ENCODE measurements at regions of chr17 and their contacts with region 1.

Region 1: GRCh38 chr17:77061669-77062068 is 79.1 kb upstream of the SEC14L1 start:
- DNase-seq: no peak
- ATAC-seq: no peak
- H3K4me3 ChIP-seq: no peak overlapping the region
- H3K27ac ChIP-seq: no peak overlapping the region
- H3K4me1 ChIP-seq: no peaks in the 10 kb centered on the region; the same call in 1 of the 2 replicates
- H3K27me3 ChIP-seq: peaks cover 28% of the 10 kb centered on the region
- CTCF ChIP-seq: no peak
- POLR2A ChIP-seq: no peak
- RAD21 ChIP-seq: no peak

Region 2: DNA sequence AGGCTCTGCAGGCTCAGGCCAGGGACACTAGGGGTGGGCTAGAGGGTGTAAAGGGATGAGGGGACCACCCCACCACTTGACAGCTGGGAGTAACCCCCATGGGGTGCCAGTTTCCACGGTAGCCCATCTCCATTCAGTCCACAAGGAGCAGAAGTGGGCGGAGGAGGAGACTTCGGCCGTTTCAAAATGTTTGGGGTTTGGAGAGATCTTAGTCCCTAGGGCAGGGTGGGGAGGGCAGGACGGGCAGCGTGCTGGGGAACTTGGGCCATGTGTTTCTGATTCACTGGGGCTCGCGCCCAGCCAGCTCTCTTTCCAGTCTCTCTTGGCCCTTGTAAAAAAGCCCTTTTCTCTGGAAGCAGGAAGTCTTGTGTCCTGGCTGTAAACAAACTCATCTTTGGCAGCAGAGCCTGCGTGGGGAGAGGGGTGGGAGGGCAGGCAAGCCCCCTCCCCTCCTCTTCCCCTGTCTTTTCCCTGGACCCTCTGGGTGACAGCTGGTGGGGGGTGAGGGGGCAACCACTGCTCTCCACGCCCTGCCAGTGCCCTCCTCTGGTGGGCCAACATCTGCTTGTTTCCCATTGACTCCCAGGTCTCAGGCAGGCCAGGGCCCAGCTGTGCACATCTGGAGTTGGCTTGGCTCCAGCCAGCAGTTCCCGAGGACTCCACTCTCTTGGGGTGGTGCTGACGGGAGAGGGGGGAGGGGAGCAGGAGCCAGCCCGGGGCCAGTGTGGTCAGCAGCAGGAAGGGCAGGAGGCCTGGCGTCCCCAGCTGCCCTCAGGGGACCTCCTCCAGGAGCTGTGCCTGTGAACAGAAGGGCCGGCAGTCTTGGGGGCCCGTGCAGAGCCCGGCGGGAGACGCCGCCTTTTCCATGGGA is 532.2 kb before region 1 on chr17:
- CTCF ChIA-PET with region 1: no interaction called
- POLR2A ChIA-PET with region 1: no interaction called
- dilution Hi-C with region 1: no loop called
- in situ Hi-C with region 1: no loop called
- intact Hi-C with region 1: loop called (anchors 10 kb)
- DNase-seq: peak; percentile 88
- ATAC-seq: peak; percentile 70
- H3K4me3 ChIP-seq: no peak overlapping the region
- H3K27ac ChIP-seq: peak overlapping the region; percentile 89
- H3K4me1 ChIP-seq: peaks cover 47% of the 10 kb centered on the region
- H3K27me3 ChIP-seq: no peaks in the 10 kb centered on the region
- CTCF ChIP-seq: no peak
- POLR2A ChIP-seq: peak; percentile 6; the same call in 1 of the 2 replicates
- RAD21 ChIP-seq: no peak

Region 3: DNA sequence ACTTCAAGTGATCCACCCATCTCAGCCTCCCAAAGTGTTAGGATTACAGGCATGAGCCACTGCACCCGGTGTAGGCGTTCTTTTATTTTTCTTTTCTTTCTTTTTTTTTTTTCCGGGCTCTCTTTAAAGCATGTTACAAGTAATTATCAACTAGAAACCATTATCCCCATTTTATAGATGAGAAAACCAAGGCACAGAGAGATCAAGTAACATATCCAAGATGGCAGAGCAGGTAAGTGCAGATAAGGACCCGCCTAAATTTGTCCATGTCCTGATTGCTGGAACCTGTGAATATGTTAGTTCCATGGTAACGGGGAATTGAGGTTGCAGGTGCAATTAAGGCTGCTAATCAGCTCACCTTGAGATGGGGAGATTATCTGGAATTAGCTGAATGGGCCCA is 269.3 kb before region 1 on chr17:
- CTCF ChIA-PET with region 1: no interaction called
- POLR2A ChIA-PET with region 1: no interaction called
- dilution Hi-C with region 1: no loop called
- in situ Hi-C with region 1: no loop called
- intact Hi-C with region 1: no loop called
- DNase-seq: no peak
- ATAC-seq: no peak
- H3K4me3 ChIP-seq: no peak overlapping the region
- H3K27ac ChIP-seq: no peak overlapping the region
- H3K4me1 ChIP-seq: peaks cover 2% of the 10 kb centered on the region; the same call in 1 of the 2 replicates
- H3K27me3 ChIP-seq: no peaks in the 10 kb centered on the region
- CTCF ChIP-seq: no peak
- POLR2A ChIP-seq: no peak
- RAD21 ChIP-seq: no peak

Region 4: DNA sequence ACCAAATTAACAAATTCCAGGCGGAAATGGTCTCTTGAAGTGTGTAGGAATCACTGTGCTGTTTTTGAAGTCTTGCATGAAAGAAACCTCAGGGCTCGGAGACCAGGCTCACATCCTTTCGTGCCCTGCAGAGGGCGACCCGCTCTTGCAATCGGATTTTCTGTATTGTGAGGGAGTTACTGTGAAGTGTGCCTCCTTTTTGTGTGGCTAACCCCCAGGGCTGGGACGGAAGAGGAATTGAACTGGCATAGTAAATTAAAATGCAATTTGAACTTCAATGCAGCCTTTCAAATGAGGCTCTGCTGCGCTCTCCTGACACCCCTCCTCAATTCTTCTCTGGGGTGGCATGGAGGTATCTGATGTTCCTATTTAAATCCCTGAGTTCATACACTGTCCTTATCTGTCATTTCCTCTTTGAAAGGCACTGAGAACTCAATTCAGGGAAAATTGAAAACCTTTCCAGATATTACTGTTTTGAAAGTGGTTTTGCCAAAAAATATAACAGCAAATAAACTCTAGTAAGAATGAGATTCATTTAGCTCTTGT is 245.0 kb before region 1 on chr17:
- CTCF ChIA-PET with region 1: interaction called, 4 read pairs
- POLR2A ChIA-PET with region 1: no interaction called
- dilution Hi-C with region 1: no loop called
- in situ Hi-C with region 1: no loop called
- intact Hi-C with region 1: loop called (anchors 1 kb)
- DNase-seq: peak; percentile 42
- ATAC-seq: peak; percentile 85
- H3K4me3 ChIP-seq: no peak overlapping the region
- H3K27ac ChIP-seq: no peak overlapping the region
- H3K4me1 ChIP-seq: no peaks in the 10 kb centered on the region
- H3K27me3 ChIP-seq: peaks cover 28% of the 10 kb centered on the region
- CTCF ChIP-seq: peak; percentile 69
- POLR2A ChIP-seq: no peak
- RAD21 ChIP-seq: peak; percentile 75